ENCODE measurements at regions of chr12 and their contacts with region 1.

Region 1: DNA sequence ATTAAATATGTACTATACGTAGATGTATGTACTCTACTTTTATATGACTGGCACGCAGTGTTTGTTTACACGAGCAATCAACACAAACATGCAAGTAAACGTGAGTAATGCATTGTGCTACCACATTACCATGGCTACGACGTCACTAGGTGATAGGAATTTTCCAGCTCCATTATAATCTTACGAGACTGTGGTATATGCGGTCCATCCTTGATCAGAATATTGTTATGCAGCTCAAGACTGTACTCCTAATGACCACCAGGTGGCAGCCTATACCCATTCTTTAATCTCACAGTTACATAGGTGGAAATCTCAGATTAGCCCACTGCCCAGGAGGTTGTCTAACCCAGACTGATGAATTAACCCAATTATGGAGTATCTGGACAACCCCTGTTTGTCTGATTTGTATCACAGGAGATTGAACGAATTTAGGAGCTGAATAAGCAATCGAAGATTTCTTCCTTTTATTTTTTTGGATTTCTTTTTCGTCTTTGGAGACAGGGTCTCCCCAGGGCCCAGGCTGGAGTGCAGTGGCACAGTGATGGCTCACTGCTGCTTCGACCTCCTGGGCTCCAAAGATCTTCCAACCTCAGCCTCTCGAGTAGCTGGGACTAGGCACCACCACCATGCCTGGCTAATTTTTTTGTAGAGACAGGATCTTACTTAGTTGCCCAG is 8.7 kb upstream of the TESPA1 start:
- DNase-seq: peak; percentile 71 to 87 (median 73)
- H3K4me3 ChIP-seq: no peak overlapping the region
- H3K4me3 Mint-ChIP-seq: peak overlapping the region in 3 of 8 donors; percentile 12 to 22 (median 15)
- H3K27ac ChIP-seq: no peak overlapping the region
- H3K27ac Mint-ChIP-seq: peak overlapping the region in 2 of 7 donors; percentile 32 to 36
- H3K4me1 ChIP-seq: peaks cover 46% of the 10 kb centered on the region
- H3K4me1 Mint-ChIP-seq: peaks cover 36 to 49% (median 39%) of the 10 kb centered on the region in 4 donors
- H3K27me3 ChIP-seq: no peaks in the 10 kb centered on the region
- H3K27me3 Mint-ChIP-seq: no peaks in the 10 kb centered on the region

Region 2: GRCh38 chr12:54164387-54165145 is 828.7 kb before region 1 on chr12:
- CTCF ChIA-PET with region 1: no interaction called
- POLR2A ChIA-PET with region 1: no interaction called
- intact Hi-C with region 1: no loop called
- DNase-seq: no peak
- H3K4me3 ChIP-seq: no peak overlapping the region
- H3K4me3 Mint-ChIP-seq: no peak overlapping the region
- H3K27ac ChIP-seq: no peak overlapping the region
- H3K27ac Mint-ChIP-seq: peak overlapping the region in 1 of 7 donors; percentile 48
- H3K4me1 ChIP-seq: no peaks in the 10 kb centered on the region
- H3K4me1 Mint-ChIP-seq: no peaks in the 10 kb centered on the region
- H3K27me3 ChIP-seq: no peaks in the 10 kb centered on the region
- H3K27me3 Mint-ChIP-seq: peaks cover 9 to 15% of the 10 kb centered on the region in 2 donors

Region 3: GRCh38 chr12:54740882-54741281 is 252.4 kb before region 1 on chr12:
- CTCF ChIA-PET with region 1: interaction called, 17 read pairs
- POLR2A ChIA-PET with region 1: interaction called, 3 read pairs
- intact Hi-C with region 1: no loop called
- DNase-seq: peak in 4 of 5 donors; percentile 36 to 64 (median 52)
- H3K4me3 ChIP-seq: no peak overlapping the region
- H3K4me3 Mint-ChIP-seq: peak overlapping the region; percentile 26 to 78 (median 60)
- H3K27ac ChIP-seq: no peak overlapping the region
- H3K27ac Mint-ChIP-seq: peak overlapping the region; percentile 41 to 86 (median 63)
- H3K4me1 ChIP-seq: peaks cover 56% of the 10 kb centered on the region
- H3K4me1 Mint-ChIP-seq: peaks cover 52 to 95% (median 66%) of the 10 kb centered on the region in 4 donors
- H3K27me3 ChIP-seq: no peaks in the 10 kb centered on the region
- H3K27me3 Mint-ChIP-seq: no peaks in the 10 kb centered on the region

Region 4: DNA sequence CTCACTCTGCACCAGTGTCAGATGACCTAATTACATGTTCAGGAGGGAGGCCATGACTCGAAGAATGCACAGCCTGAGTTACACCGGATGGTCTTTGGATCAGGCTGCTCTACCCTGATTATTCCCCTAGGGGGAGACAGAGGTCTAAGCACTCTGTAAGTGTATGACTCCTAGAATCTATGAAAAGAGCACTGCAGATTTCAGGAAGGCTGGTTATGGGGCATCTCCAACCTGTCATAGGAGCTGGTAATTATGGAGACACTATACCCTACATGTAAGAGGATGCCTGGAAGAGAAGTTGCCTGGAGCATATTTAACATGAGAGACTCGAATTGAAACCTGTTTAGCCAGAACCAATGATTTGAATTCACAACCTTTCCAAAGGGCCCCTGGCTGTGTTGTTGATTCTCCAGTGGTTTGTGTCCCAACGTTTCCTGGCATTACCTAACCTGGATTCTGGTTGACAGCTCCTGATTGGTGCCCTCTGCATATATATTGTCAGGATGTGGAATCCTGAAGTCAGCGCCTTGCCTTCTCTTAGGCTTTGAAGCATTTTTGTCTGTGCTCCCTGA is 139.2 kb before region 1 on chr12 and contains the start of gene MUCL1:
- CTCF ChIA-PET with region 1: interaction called, 32 read pairs
- POLR2A ChIA-PET with region 1: no interaction called
- intact Hi-C with region 1: loop called (anchors 1 kb)
- DNase-seq: peak; percentile 67 to 74 (median 69)
- H3K4me3 ChIP-seq: no peak within 1 kb of the TSS
- H3K4me3 Mint-ChIP-seq: no peak within 1 kb of the TSS
- H3K27ac ChIP-seq: no peak within 1 kb of the TSS
- H3K27ac Mint-ChIP-seq: peak within 1 kb of the TSS in 1 of 7 donors; percentile 55
- H3K4me1 ChIP-seq: no peaks in the 10 kb centered on the region
- H3K4me1 Mint-ChIP-seq: no peaks in the 10 kb centered on the region
- H3K27me3 ChIP-seq: no peaks in the 10 kb centered on the region
- H3K27me3 Mint-ChIP-seq: no peaks in the 10 kb centered on the region
- total RNA-seq, gene MUCL1: not detected

Region 5: GRCh38 chr12:54958048-54958658 is 35.1 kb before region 1 on chr12:
- CTCF ChIA-PET with region 1: interaction called, 39 read pairs
- POLR2A ChIA-PET with region 1: interaction called, 3 read pairs
- intact Hi-C with region 1: loop called (anchors 2 kb)
- DNase-seq: peak; percentile 55 to 68 (median 61)
- H3K4me3 ChIP-seq: no peak overlapping the region
- H3K4me3 Mint-ChIP-seq: peak overlapping the region in 5 of 8 donors; percentile 2 to 65 (median 18)
- H3K27ac ChIP-seq: no peak overlapping the region
- H3K27ac Mint-ChIP-seq: peak overlapping the region; percentile 37 to 84 (median 74)
- H3K4me1 ChIP-seq: peaks cover 85% of the 10 kb centered on the region
- H3K4me1 Mint-ChIP-seq: peaks cover 71 to 94% (median 84%) of the 10 kb centered on the region in 4 donors
- H3K27me3 ChIP-seq: no peaks in the 10 kb centered on the region
- H3K27me3 Mint-ChIP-seq: no peaks in the 10 kb centered on the region

Region 6: DNA sequence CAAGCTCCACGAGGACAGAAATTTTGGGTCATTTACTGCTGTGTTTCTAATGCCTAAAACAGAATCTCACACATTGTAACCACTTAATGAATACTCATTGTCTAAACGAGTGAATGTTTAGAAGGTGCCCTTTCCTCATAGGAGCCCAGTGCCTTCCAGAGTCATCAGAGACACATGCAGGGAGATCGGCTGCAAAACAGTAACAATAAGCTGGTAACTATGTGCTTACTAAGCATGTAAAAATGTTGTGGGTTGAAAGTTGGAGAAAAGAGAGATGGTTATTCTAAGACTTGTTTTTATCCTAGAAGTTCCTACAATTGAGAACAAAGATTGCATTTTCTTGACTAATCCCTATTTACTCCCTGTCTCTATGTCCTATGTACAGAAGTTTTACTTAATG is 16.1 kb before region 1 on chr12:
- CTCF ChIA-PET with region 1: interaction called, 67 read pairs
- POLR2A ChIA-PET with region 1: interaction called, 37 read pairs
- intact Hi-C with region 1: no loop called
- DNase-seq: no peak
- H3K4me3 ChIP-seq: peak overlapping the region; percentile 16 to 22
- H3K4me3 Mint-ChIP-seq: peak overlapping the region; percentile 81 to 99 (median 93)
- H3K27ac ChIP-seq: peak overlapping the region; percentile 38
- H3K27ac Mint-ChIP-seq: peak overlapping the region; percentile 84 to 99 (median 94)
- H3K4me1 ChIP-seq: peaks cover 98% of the 10 kb centered on the region
- H3K4me1 Mint-ChIP-seq: peaks cover 77 to 98% (median 90%) of the 10 kb centered on the region in 4 donors
- H3K27me3 ChIP-seq: no peaks in the 10 kb centered on the region
- H3K27me3 Mint-ChIP-seq: no peaks in the 10 kb centered on the region

Region 7: GRCh38 chr12:55060470-55060869 is 67.2 kb after region 1 on chr12:
- CTCF ChIA-PET with region 1: interaction called, 751 read pairs
- POLR2A ChIA-PET with region 1: no interaction called
- intact Hi-C with region 1: no loop called
- DNase-seq: no peak
- H3K4me3 ChIP-seq: no peak overlapping the region
- H3K4me3 Mint-ChIP-seq: no peak overlapping the region
- H3K27ac ChIP-seq: no peak overlapping the region
- H3K27ac Mint-ChIP-seq: no peak overlapping the region
- H3K4me1 ChIP-seq: no peaks in the 10 kb centered on the region
- H3K4me1 Mint-ChIP-seq: peaks cover 0 to 1% (median 0%) of the 10 kb centered on the region in 4 donors
- H3K27me3 ChIP-seq: no peaks in the 10 kb centered on the region
- H3K27me3 Mint-ChIP-seq: peaks cover 3 to 4% of the 10 kb centered on the region in 2 donors

Measured in CD4-positive, alpha-beta memory T cell (primary cell).